OCI-LY7 (cell line): ENCODE measurements at regions of chr3 and their contacts with region 1.

Region 1: GRCh38 chr3:31624083-31624709 is 91.5 kb downstream of the STT3B start:
- DNase-seq: no peak
- H3K4me3 ChIP-seq: no peak overlapping the region
- H3K27ac ChIP-seq: no peak overlapping the region
- H3K4me1 ChIP-seq: peaks cover 12% of the 10 kb centered on the region
- CTCF ChIP-seq: no peak

Region 2: GRCh38 chr3:31634481-31634880 is 10.3 kb after region 1 on chr3:
- CTCF ChIA-PET with region 1: interaction called, 3 read pairs
- POLR2A ChIA-PET with region 1: interaction called, 12 read pairs
- intact Hi-C with region 1: no loop called
- DNase-seq: no peak
- H3K4me3 ChIP-seq: no peak overlapping the region
- H3K27ac ChIP-seq: no peak overlapping the region
- H3K4me1 ChIP-seq: no peaks in the 10 kb centered on the region
- CTCF ChIP-seq: no peak